ENCODE measurements at regions of chr5 and their contacts with region 1.

Region 1: DNA sequence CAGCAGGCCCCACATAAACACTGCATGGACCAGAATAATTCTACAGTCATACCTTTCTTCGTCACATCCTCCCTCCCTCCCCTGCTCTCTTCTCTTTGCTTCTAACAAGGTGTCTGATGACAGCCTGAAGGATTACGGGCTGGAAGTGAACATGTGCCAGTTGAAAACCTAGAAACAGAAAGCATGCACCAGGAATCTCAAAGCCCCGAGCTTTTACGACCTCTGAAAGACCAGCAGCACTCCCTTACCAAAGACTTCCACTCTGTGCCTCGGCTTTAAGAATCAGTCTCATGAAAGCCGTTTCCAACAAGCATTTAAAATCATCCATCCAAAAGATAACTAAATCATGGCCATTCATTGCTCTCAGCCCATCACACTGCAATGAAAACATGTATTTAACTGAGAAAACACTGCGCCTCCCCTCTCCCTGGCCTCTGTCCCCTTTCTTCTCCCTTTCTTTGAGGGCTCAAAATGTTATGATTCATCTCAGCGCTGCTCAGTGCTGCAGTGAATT is 21.3 kb downstream of the MSX2 start:
- DNase-seq: no peak
- H3K4me3 ChIP-seq: no peak overlapping the region
- H3K27ac ChIP-seq: no peak overlapping the region
- H3K4me1 ChIP-seq: no peaks in the 10 kb centered on the region
- H3K27me3 ChIP-seq: peaks cover 2% of the 10 kb centered on the region
- CTCF ChIP-seq: no peak

Region 2: DNA sequence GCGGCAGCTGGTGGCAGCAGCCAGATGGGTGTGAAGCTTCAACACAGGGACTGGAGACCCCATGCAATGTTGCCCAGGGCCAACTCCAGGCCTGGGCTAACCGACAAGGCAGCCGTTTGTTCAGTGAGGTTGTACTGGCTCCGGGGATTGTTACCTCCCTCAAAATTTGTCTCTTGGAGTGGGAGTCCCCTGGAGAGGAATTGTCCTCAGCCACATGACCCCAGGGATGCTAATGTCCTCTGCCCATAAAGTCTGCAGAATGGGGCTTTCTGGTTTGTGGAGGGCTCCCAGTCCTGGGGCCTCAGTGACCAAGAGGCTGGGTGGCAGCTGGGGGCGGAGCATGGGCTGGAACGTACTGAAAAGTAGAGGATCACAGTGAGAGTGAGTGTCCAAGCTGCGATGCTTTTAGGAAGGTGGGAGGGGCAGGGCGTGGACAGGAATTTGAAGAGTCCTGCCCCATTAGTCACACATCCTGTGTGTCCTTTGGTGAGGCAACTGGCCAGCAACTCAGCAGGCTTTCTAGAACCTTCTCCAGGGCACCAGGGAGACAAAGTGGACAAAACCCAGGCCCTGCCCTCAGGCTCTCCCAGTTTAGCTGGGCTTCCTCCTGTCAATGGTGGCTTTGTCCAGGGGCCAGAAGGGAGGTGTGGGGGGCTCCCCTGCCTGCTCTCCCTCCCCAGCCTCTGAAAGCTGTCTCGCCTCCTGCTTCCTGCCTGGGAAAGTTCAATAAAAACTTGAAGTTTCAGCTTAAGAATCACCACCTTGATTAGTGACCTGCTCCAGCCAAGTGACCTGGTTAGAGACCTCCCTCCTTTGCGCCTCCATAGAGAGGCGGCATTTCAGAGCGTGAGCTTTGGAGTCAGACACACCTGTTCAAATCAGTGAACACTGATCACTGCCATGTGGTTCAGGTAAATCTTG is 586.1 kb before region 1 on chr5:
- CTCF ChIA-PET with region 1: no interaction called
- dilution Hi-C with region 1: loop called (anchors 10 kb)
- in situ Hi-C with region 1: no loop called
- intact Hi-C with region 1: no loop called
- DNase-seq: peak; percentile 51
- H3K4me3 ChIP-seq: no peak overlapping the region
- H3K27ac ChIP-seq: no peak overlapping the region
- H3K4me1 ChIP-seq: peaks cover 6% of the 10 kb centered on the region
- H3K27me3 ChIP-seq: no peaks in the 10 kb centered on the region
- CTCF ChIP-seq: no peak

Region 3: GRCh38 chr5:174364676-174365075 is 381.0 kb before region 1 on chr5:
- CTCF ChIA-PET with region 1: no interaction called
- dilution Hi-C with region 1: no loop called
- in situ Hi-C with region 1: no loop called
- intact Hi-C with region 1: no loop called
- DNase-seq: peak; percentile 27
- H3K4me3 ChIP-seq: no peak overlapping the region
- H3K27ac ChIP-seq: no peak overlapping the region
- H3K4me1 ChIP-seq: no peaks in the 10 kb centered on the region
- H3K27me3 ChIP-seq: no peaks in the 10 kb centered on the region
- CTCF ChIP-seq: no peak

Region 4: GRCh38 chr5:174799121-174799520 is 53.5 kb after region 1 on chr5:
- CTCF ChIA-PET with region 1: no interaction called
- dilution Hi-C with region 1: loop called (anchors 5 kb)
- in situ Hi-C with region 1: no loop called
- intact Hi-C with region 1: no loop called
- DNase-seq: no peak
- H3K4me3 ChIP-seq: no peak overlapping the region
- H3K27ac ChIP-seq: no peak overlapping the region
- H3K4me1 ChIP-seq: no peaks in the 10 kb centered on the region
- H3K27me3 ChIP-seq: no peaks in the 10 kb centered on the region
- CTCF ChIP-seq: no peak